Calu3 (cell line): ENCODE measurements at regions of chr2 and their contacts with region 1.

Region 1: DNA sequence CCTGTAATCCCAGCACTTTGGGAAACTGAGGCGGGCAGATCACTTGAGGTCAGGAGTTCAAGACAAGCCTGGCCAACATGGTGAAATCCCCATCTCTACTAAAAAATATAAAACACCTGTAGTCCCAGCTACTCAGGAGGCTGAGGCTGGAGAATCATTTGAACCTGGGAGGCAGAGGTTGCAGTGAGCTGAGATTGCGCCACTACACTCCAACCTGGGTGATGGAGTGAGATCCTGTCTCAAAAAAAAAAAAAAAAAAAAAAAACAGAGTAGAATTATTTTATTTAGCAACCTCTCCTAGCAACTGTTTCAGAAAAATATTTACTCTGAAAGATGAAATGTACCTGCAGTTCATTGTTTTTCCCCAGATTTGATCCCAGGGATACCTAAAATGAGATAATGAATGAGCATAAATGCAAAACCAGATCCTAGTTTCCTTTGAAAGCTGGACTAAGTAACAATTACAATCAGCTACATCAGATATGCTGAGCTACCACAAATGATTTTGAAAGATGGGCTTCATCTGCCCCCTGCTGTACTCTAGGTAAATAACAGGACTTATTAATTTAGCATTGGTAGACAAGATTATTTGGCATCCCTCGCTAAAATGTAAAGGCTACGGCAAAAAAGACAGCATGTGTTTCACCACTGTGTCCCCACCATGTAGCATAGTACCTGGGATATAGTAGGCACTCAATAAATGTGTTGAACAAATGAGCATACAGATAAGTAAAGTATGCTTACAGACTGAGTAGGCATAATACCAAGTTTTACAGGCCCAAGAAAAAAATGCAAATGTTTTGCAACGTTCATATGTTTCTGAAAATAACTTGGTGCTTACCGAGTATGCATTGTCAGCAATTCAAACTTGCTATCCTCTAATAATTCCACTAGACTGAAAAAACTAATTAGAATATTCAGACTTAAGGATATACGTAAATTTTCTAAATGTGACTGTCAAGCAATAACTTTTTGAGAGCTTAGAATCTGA is 102.5 kb downstream of the ATL2 start:
- DNase-seq: peak; percentile 48
- H3K4me3 Mint-ChIP-seq: no peak overlapping the region
- H3K27ac Mint-ChIP-seq: peak overlapping the region; percentile 71
- H3K4me1 Mint-ChIP-seq: peaks cover 26% of the 10 kb centered on the region
- H3K27me3 Mint-ChIP-seq: no peaks in the 10 kb centered on the region
- CTCF ChIP-seq: peak; percentile 49

Region 2: DNA sequence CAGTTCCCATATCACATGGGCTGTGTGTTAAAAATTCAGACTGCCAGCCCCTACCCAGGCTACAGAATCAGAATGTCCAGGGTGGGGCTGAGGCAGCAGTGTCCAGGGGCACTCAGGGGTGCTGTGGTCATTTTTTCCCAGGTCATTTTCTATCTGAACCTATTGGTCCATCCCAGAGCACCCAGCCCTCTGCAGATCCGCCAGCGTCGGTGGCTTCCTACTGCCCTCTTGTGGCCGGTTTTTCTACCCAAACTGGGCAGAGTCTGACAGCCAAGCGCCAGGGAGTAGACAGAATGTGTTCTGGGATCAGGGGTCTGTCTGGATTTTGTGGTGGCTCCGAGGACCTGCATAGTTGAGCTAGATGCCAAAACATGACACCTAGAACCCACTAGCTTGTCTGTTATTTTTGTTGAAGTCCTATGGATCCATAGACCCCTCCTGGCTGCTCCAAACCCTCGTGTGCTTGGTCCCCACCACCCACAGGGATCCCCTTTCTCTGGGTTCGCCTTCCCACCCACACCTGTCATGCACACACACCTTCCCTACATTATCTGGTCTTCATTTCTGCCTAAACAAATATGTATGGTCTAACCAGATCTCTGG is 383.6 kb before region 1 on chr2:
- CTCF ChIA-PET with region 1: interaction called, 10 read pairs
- intact Hi-C with region 1: loop called (anchors 10 kb)
- DNase-seq: peak; percentile 80
- H3K4me3 Mint-ChIP-seq: no peak overlapping the region
- H3K27ac Mint-ChIP-seq: no peak overlapping the region
- H3K4me1 Mint-ChIP-seq: peaks cover 18% of the 10 kb centered on the region
- H3K27me3 Mint-ChIP-seq: peaks cover 7% of the 10 kb centered on the region
- CTCF ChIP-seq: peak; percentile 83

Region 3: DNA sequence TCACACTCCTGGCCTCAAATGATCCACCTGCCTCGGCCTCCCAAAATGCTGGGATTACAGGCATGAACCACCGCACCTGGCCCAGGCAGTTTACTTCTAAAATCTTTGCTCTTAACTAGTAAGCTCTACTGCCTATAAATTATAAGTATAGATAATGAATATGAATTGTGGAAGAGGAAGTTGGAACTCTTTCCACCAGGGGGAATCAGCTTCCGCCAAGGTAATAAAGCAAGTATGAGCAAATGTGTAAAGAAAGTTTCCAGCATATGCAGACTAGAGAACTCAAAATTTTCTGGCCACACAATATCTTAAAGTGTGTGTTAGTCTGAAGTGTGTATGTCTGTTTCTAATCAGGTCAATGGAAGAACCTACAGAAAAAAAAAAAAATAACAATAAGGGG is 281.4 kb before region 1 on chr2:
- CTCF ChIA-PET with region 1: interaction called, 17 read pairs
- intact Hi-C with region 1: no loop called
- DNase-seq: no peak
- H3K4me3 Mint-ChIP-seq: peak overlapping the region; percentile 39
- H3K27ac Mint-ChIP-seq: peak overlapping the region; percentile 80
- H3K4me1 Mint-ChIP-seq: peaks cover 36% of the 10 kb centered on the region
- H3K27me3 Mint-ChIP-seq: no peaks in the 10 kb centered on the region
- CTCF ChIP-seq: no peak

Region 4: DNA sequence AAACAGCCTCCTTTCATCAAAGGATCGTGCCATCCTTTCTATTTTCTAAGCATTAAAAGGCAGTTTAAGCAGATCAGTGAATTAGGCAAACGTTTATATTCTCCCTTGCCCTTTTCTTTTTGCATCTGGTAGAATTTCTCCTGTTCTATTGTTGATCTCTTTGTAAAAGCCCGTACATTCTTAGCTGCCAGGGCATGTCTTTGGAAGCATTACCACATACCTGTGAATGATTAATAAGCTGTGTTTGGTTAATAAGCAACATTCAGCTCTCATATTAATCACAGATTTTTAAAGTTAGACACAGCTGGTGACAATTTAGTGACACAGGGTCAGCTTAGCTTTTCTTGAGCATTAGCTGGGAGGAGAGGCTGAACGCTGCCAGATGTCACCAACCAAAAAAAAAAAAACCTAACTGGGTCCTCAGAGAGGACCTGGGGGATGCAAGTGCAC is 164.8 kb before region 1 on chr2:
- CTCF ChIA-PET with region 1: interaction called, 11 read pairs
- intact Hi-C with region 1: loop called (anchors 2 kb)
- DNase-seq: peak; percentile 29
- H3K4me3 Mint-ChIP-seq: peak overlapping the region; percentile 55
- H3K27ac Mint-ChIP-seq: peak overlapping the region; percentile 91
- H3K4me1 Mint-ChIP-seq: peaks cover 84% of the 10 kb centered on the region
- H3K27me3 Mint-ChIP-seq: no peaks in the 10 kb centered on the region
- CTCF ChIP-seq: no peak

Region 5: GRCh38 chr2:38122344-38122743 is 152.2 kb before region 1 on chr2:
- CTCF ChIA-PET with region 1: interaction called, 11 read pairs
- intact Hi-C with region 1: no loop called
- DNase-seq: no peak
- H3K4me3 Mint-ChIP-seq: no peak overlapping the region
- H3K27ac Mint-ChIP-seq: no peak overlapping the region
- H3K4me1 Mint-ChIP-seq: peaks cover 31% of the 10 kb centered on the region
- H3K27me3 Mint-ChIP-seq: no peaks in the 10 kb centered on the region
- CTCF ChIP-seq: no peak

Region 6: GRCh38 chr2:38362232-38362631 is 87.7 kb after region 1 on chr2:
- CTCF ChIA-PET with region 1: no interaction called
- intact Hi-C with region 1: no loop called
- DNase-seq: no peak
- H3K4me3 Mint-ChIP-seq: peak overlapping the region; percentile 17
- H3K27ac Mint-ChIP-seq: no peak overlapping the region
- H3K4me1 Mint-ChIP-seq: peaks cover 46% of the 10 kb centered on the region
- H3K27me3 Mint-ChIP-seq: no peaks in the 10 kb centered on the region
- CTCF ChIP-seq: no peak

Region 7: GRCh38 chr2:38438883-38439612 is 164.5 kb after region 1 on chr2:
- CTCF ChIA-PET with region 1: interaction called, 13 read pairs
- intact Hi-C with region 1: no loop called
- DNase-seq: peak; percentile 84
- H3K4me3 Mint-ChIP-seq: peak overlapping the region; percentile 34
- H3K27ac Mint-ChIP-seq: peak overlapping the region; percentile 95
- H3K4me1 Mint-ChIP-seq: peaks cover 76% of the 10 kb centered on the region
- H3K27me3 Mint-ChIP-seq: no peaks in the 10 kb centered on the region
- CTCF ChIP-seq: no peak

Region 8: DNA sequence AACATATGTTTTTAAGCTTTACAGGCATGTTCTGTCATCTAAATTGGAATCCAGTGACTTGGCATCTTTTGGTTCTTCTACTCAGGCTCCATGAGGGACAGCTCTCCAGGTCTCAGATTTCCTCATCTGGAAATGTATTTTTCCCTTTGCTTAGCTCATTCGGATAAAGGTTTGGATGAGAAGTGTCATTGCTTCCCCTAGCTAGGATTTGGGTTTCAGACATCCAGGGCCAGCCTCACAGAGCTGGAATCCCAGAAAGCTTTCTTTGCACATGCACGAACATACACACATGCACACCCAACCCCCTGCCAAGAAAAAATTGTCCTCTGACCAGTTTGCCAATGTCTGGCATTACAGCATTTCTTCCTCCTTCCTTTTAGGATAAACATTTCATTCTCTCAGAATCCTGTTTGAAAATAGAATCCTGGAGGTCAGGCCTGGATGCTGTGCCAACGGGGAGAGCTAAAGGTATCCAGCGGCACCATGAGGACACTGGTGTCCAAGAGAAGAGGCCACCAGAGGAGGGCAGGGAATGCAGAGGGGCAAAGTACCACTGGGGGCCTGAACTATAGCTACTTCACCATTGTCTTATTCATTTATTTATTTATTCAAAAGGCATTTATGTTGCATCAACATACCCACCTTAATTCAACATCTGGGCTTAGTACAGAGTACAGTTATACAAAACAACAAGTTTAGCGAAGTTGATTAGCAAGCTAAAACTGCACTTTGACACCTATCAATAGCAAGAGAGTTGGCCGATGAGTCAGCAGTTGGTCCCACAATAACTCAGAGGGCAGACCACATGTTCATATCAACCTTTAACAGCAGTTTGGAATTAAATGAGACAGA is 200.4 kb after region 1 on chr2:
- CTCF ChIA-PET with region 1: no interaction called
- intact Hi-C with region 1: no loop called
- DNase-seq: peak; percentile 39
- H3K4me3 Mint-ChIP-seq: peak overlapping the region; percentile 3
- H3K27ac Mint-ChIP-seq: peak overlapping the region; percentile 57
- H3K4me1 Mint-ChIP-seq: peaks cover 25% of the 10 kb centered on the region
- H3K27me3 Mint-ChIP-seq: no peaks in the 10 kb centered on the region
- CTCF ChIP-seq: no peak